Mammary epithelial cell (primary cell): ENCODE measurements at regions of chr13 and their contacts with region 1.

Region 1: DNA sequence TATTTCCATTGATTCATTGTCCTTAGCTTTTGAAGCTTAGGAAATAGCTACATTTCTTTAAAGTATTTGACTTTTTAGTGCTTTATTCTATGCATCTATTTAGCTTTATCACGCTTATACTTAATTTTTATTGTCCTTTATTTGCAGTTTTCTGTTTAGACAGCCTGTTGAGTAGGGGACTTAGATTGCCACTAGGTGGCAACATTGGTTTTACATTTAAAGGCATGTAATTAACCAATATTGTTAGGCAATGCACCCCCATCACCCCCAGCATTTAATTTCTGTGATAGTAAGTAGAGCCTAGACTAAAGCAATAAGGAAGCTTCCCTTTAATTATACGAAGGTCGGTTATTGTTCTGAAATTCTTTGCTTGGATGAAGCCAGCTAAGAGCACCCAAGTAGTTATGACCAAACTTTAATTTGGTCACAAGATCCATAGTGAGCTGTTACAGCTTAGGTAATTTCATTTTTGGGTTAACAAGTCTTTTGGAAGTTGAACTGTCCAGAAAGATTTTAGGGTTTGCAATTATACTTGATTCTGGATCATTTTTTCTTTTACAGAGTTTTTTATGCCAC is 36.5 kb downstream of the B3GLCT start:
- DNase-seq: peak; percentile 14
- H3K4me3 ChIP-seq: no peak overlapping the region
- H3K27ac ChIP-seq: no peak overlapping the region
- H3K4me1 ChIP-seq: no peaks in the 10 kb centered on the region
- H3K27me3 ChIP-seq: no peaks in the 10 kb centered on the region
- CTCF ChIP-seq: peak; percentile 76 to 81

Region 2: GRCh38 chr13:31174018-31174417 is 62.3 kb before region 1 on chr13:
- CTCF ChIA-PET with region 1: no interaction called
- dilution Hi-C with region 1: no loop called
- in situ Hi-C with region 1: no loop called
- intact Hi-C with region 1: loop called (anchors 2 kb)
- DNase-seq: no peak
- H3K4me3 ChIP-seq: no peak overlapping the region
- H3K27ac ChIP-seq: no peak overlapping the region
- H3K4me1 ChIP-seq: peaks cover 20% of the 10 kb centered on the region
- H3K27me3 ChIP-seq: no peaks in the 10 kb centered on the region
- CTCF ChIP-seq: peak in 1 of 2 donors; percentile 26

Region 3: DNA sequence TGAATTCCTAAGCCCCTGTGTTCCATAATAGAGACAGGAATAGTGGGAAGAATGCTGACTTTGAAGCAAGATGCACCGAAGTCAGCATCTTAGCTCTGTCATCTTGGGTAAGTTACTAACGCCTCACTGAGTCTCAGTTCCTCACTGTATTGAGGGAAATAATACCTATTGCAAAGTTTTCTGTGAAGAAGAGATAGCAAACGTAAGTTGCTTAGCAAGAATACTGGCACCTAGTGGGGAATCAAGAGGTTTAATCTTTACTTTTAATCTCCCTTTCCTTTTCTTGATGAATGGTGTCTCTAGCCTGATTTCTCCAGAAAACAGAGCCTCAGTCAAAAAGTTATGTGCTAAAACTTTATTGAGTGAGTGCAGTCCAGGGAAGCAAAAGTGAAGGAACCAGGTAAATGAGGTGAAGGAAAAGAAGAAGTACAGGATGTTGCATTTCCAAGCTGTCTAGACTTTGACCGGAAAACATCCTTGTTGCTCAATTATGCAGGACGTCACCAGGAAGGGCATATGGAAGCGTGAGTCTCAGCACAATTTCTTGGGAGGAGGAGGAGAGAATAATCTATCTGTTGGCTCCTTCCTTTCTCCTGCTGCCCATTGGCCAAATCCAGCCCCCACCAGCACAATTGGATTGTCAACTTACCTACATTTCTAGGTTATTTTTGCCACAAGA is 173.5 kb after region 1 on chr13:
- CTCF ChIA-PET with region 1: no interaction called
- dilution Hi-C with region 1: loop called (anchors 25 kb)
- in situ Hi-C with region 1: no loop called
- intact Hi-C with region 1: loop called (anchors 5 kb)
- DNase-seq: peak; percentile 3
- H3K4me3 ChIP-seq: no peak overlapping the region
- H3K27ac ChIP-seq: no peak overlapping the region
- H3K4me1 ChIP-seq: no peaks in the 10 kb centered on the region
- H3K27me3 ChIP-seq: no peaks in the 10 kb centered on the region
- CTCF ChIP-seq: peak in 1 of 2 donors; percentile 43

Region 4: DNA sequence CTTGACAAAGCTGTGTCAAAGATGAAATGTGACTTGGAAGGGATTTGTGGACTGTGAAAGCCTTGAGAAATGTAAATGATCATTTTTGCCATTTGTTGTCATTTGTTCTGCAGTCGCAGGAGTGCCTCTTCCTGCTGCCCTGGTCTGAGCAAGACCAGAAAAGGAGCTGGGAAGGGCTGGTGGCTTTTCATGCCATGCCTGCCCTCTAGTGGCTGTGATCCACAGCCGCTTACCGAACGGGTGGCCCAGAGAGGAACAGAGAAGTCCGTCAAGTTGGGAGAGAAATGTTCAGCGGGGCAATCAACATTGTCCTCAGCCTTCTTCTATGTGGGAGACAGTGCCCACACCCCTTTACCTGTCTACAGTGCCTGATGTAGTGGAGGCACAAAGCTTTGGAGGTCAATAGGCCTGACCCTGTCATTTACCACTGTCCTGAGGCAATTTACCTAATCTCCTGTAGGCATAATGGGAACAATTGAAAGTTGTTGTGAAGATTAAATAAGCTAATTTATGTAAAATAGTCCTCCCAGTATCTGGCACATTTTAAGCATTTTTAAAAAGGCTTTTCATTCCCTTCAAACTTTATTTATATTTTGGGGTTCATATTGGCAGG is 187.9 kb after region 1 on chr13:
- CTCF ChIA-PET with region 1: interaction called, 3 read pairs
- dilution Hi-C with region 1: loop called (anchors 25 kb)
- in situ Hi-C with region 1: loop called (anchors 5 kb)
- intact Hi-C with region 1: loop called (anchors 1 kb)
- DNase-seq: peak; percentile 62
- H3K4me3 ChIP-seq: no peak overlapping the region
- H3K27ac ChIP-seq: no peak overlapping the region
- H3K4me1 ChIP-seq: no peaks in the 10 kb centered on the region
- H3K27me3 ChIP-seq: peaks cover 4% of the 10 kb centered on the region
- CTCF ChIP-seq: peak; percentile 92 to 96

Region 5: DNA sequence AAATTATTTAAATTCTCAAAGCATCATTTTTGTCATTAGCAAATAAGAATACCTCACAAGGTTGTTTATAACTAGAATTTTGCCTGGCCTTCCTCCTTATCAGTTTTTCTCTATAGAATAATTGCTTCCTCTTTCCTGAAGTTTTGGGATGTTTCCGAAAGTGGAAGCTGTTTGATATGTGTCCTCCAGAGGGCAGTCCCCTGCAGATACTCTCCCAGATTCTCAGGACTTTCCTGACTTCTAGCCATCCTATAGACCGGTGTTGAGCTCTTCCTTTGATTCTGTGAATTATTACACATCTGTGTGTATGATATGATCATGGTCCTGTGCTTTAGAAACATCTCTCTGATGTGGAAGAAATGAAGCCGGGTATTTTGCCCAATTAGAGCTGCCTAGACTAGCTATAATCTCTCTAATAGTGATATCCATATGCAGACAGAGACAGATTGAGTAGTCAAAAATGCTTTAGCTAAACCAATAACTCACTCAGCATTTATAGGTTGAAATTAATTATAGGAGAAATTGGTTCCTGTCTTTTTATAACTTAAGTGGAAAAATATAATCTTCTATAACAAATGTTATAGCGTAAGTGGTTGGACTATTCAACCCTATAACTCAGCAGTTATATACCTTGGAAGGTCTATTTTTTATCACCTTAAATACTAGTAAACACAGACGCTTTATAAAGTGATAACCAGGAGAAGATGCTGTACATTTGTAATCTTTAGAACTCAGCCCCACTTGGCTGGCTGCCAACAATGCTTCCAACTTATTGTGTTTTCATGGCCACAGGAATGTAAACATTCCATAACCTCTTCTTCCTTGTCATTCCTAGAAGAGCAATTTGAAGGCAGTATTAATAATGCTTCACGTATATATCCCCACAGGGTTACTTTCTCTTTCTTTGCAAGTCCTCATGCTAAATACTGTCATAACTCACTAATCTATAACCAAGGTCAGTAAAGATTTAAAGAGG is 302.1 kb after region 1 on chr13:
- CTCF ChIA-PET with region 1: no interaction called
- dilution Hi-C with region 1: no loop called
- in situ Hi-C with region 1: no loop called
- intact Hi-C with region 1: loop called (anchors 10 kb)
- DNase-seq: peak; percentile 8
- H3K4me3 ChIP-seq: no peak overlapping the region
- H3K27ac ChIP-seq: no peak overlapping the region
- H3K4me1 ChIP-seq: no peaks in the 10 kb centered on the region
- H3K27me3 ChIP-seq: peaks cover 2% of the 10 kb centered on the region
- CTCF ChIP-seq: peak; percentile 53 to 75

Region 6: DNA sequence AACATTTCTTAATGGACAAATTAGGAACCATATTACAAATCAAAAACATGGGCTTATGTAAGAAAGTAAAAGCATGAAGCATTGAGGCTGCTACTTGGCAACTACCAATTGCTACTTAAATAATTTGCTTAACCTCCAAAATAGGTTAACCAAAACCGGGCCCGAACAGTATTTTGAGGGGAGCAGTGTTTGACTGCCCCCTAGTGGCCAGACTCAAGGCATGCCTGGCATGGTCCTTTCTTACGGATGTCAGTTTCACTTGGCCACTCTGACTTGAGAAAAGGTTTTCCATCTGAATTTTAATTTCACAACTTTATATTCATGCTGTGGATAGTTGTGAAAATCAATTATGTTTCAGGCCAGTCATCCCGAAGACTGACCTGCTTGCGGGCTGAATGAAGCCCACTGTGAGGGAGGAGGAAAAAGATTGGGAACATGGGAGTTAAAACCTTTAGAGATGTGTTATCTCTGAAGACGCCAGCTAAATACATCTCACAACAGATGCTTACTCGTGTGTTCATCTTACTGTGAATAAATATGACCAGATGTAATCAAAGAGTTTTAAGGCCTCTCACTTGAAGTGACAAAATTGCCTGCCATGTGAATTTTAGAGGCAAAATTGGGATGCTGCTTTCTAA is 505.9 kb after region 1 on chr13:
- CTCF ChIA-PET with region 1: no interaction called
- dilution Hi-C with region 1: no loop called
- in situ Hi-C with region 1: loop called in 1 of 2 experiments (anchors 25 kb)
- intact Hi-C with region 1: loop called (anchors 5 kb)
- DNase-seq: peak; percentile 45
- H3K4me3 ChIP-seq: no peak overlapping the region
- H3K27ac ChIP-seq: no peak overlapping the region
- H3K4me1 ChIP-seq: no peaks in the 10 kb centered on the region
- H3K27me3 ChIP-seq: no peaks in the 10 kb centered on the region
- CTCF ChIP-seq: peak; percentile 97 to 98

Region 7: GRCh38 chr13:31797154-31797775 is 561.0 kb after region 1 on chr13:
- CTCF ChIA-PET with region 1: no interaction called
- dilution Hi-C with region 1: no loop called
- in situ Hi-C with region 1: loop called in 1 of 2 experiments (anchors 25 kb)
- intact Hi-C with region 1: loop called (anchors 1 kb)
- DNase-seq: peak; percentile 22
- H3K4me3 ChIP-seq: no peak overlapping the region
- H3K27ac ChIP-seq: no peak overlapping the region
- H3K4me1 ChIP-seq: no peaks in the 10 kb centered on the region
- H3K27me3 ChIP-seq: no peaks in the 10 kb centered on the region
- CTCF ChIP-seq: peak; percentile 35 to 48